Activated naive CD4-positive, alpha-beta T cell treated with anti-CD3 and anti-CD28 coated beads for 36 hours (primary cell): ENCODE measurements at regions of chr14 and their contacts with region 1.

Region 1: DNA sequence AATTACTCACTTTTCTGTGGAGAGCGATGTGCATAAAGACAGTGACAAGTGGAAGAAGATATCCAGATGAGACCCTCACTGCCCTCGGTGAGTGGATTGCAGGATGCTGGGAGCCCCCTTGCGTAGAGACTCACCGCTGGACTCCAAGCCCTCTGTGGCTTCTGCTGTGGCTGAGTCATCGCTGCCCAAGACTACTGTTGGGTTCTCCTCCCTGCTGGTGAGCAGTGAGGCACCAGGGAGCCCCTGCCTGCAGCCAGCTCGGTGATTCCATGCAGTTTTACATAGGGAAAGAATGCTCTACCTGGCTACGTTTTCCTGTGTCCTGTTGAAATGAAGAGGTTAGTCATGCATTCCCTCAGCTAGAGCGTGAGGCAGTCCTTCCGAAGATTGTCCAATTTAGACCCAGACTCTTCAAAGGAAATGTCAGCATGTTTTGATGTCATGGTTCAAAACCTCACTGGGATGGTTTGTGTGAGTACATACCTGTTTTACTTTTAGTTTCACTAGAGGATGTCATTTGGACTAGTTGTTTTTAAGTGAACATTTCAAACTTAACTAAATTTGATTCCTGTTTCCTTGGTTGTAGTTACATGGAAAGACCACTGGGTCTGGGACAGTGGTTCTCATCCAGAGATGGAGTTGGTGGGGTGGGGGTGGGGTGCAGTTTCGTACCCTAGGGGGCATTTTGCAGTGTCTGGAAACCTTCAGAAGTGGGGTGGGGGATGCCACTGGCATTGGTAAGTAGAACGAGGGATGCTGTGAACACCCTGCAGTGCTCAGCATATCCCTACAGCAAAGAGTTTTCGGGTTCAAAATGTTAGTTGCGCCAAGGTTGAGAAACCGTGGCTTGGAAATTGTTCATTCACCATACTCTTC is 28.4 kb downstream of the TRAF3 start:
- DNase-seq: peak; percentile 63
- H3K4me3 Mint-ChIP-seq: peak overlapping the region; percentile 54
- H3K27ac Mint-ChIP-seq: peak overlapping the region; percentile 99
- H3K4me1 Mint-ChIP-seq: peaks cover 80% of the 10 kb centered on the region
- H3K27me3 Mint-ChIP-seq: no peaks in the 10 kb centered on the region

Region 2: GRCh38 chr14:102139248-102140026 is 666.2 kb before region 1 on chr14 and contains the start of gene WDR20:
- CTCF ChIA-PET with region 1: no interaction called
- intact Hi-C with region 1: no loop called
- DNase-seq: peak; percentile 99
- H3K4me3 Mint-ChIP-seq: peak within 1 kb of the TSS; percentile 95
- H3K27ac Mint-ChIP-seq: peak within 1 kb of the TSS; percentile 94
- H3K4me1 Mint-ChIP-seq: peaks cover 24% of the 10 kb centered on the region
- H3K27me3 Mint-ChIP-seq: no peaks in the 10 kb centered on the region
- total RNA-seq, gene WDR20: 20.5 to 21.4 TPM

Region 3: GRCh38 chr14:102362545-102363181 is 442.9 kb before region 1 on chr14 and contains the starts of genes CINP and TECPR2:
- CTCF ChIA-PET with region 1: no interaction called
- intact Hi-C with region 1: loop called (anchors 5 kb)
- DNase-seq: peak; percentile 99
- H3K4me3 Mint-ChIP-seq: no peak within 1 kb of the TSS
- H3K27ac Mint-ChIP-seq: peak within 1 kb of the TSS; percentile 94
- H3K4me1 Mint-ChIP-seq: peaks cover 30% of the 10 kb centered on the region
- H3K27me3 Mint-ChIP-seq: no peaks in the 10 kb centered on the region
- total RNA-seq, gene CINP: 45.3 to 46.2 TPM
- total RNA-seq, gene TECPR2: 2.3 to 3.6 TPM

Region 4: DNA sequence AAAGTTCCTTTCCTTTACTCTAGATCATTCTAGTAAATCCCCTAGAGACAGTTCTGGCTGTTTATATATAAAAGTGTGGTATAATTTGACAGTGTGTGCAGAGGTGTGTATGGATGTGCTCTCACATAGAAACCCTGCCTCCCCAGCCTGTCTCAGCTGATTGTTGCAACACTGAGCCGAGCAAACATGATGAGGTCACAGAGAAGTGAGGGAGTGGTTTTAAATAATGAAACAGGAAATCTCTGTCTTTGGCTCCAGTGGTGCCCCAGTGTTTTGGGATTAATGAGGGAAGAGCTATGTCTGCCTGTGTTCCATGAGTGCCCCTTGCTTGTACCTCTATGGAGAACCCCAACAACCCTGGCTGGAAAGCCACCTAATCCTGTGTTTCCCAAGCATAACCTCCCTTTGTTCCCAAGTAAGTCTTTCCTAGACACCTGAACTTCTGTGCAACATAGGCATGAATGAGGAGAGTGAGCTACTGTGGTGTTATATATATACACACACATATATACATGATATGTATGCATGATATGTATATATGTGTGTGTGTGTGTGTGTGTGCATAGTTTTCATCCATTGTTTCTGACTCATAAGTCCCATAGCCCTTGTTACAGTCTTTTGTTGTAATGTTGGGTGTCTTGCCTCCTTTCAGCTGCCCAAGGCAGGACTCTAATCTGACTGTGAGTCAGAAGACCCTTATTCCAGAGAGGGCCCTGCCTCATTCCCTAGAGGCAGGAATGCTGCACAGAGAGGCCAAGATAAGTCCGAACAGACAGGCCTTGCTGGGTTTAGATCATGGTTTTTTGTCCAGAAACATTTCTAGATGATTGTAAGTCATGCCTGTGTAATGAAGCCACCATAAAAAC is 10.3 kb before region 1 on chr14:
- CTCF ChIA-PET with region 1: interaction called, 3 read pairs
- intact Hi-C with region 1: loop called (anchors 1 kb)
- DNase-seq: peak; percentile 76
- H3K4me3 Mint-ChIP-seq: no peak overlapping the region
- H3K27ac Mint-ChIP-seq: peak overlapping the region; percentile 65
- H3K4me1 Mint-ChIP-seq: peaks cover 78% of the 10 kb centered on the region
- H3K27me3 Mint-ChIP-seq: no peaks in the 10 kb centered on the region

Region 5: DNA sequence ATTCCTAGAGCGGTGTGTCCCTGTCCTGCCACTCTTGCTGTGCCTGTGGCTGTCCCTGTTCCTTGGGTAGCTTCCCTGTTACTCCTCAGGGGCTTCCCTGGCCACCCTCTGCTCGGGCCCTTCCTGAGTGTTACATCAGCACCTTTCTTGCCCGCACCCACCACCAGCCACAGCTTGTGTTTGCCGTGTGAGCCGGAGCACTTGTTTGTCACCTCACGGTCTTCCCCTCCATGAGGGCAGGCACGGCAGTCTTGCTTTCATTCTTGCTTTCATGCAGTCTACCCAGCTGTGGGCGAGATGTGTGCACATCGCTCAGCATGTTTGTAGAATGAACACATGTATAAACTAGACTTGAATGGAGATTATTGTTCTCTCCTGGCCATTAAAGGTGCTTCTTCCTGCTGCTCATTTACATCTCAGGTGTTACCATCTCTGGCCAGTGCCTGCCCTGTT is 13.6 kb after region 1 on chr14:
- CTCF ChIA-PET with region 1: interaction called, 19 read pairs
- intact Hi-C with region 1: loop called (anchors 1 kb)
- DNase-seq: peak; percentile 93
- H3K4me3 Mint-ChIP-seq: peak overlapping the region; percentile 44
- H3K27ac Mint-ChIP-seq: peak overlapping the region; percentile 93
- H3K4me1 Mint-ChIP-seq: peaks cover 88% of the 10 kb centered on the region
- H3K27me3 Mint-ChIP-seq: no peaks in the 10 kb centered on the region

Region 6: GRCh38 chr14:102882226-102882906 is 76.8 kb after region 1 on chr14:
- CTCF ChIA-PET with region 1: interaction called, 3 read pairs
- intact Hi-C with region 1: loop called (anchors 1 kb)
- DNase-seq: no peak
- H3K4me3 Mint-ChIP-seq: no peak overlapping the region
- H3K27ac Mint-ChIP-seq: peak overlapping the region; percentile 80
- H3K4me1 Mint-ChIP-seq: peaks cover 20% of the 10 kb centered on the region
- H3K27me3 Mint-ChIP-seq: no peaks in the 10 kb centered on the region

Region 7: GRCh38 chr14:102966681-102967505 is 161.3 kb after region 1 on chr14:
- CTCF ChIA-PET with region 1: no interaction called
- intact Hi-C with region 1: no loop called
- DNase-seq: no peak
- H3K4me3 Mint-ChIP-seq: no peak overlapping the region
- H3K27ac Mint-ChIP-seq: no peak overlapping the region
- H3K4me1 Mint-ChIP-seq: no peaks in the 10 kb centered on the region
- H3K27me3 Mint-ChIP-seq: no peaks in the 10 kb centered on the region